ENCODE measurements at regions of chr6 and their contacts with region 1.

Region 1: DNA sequence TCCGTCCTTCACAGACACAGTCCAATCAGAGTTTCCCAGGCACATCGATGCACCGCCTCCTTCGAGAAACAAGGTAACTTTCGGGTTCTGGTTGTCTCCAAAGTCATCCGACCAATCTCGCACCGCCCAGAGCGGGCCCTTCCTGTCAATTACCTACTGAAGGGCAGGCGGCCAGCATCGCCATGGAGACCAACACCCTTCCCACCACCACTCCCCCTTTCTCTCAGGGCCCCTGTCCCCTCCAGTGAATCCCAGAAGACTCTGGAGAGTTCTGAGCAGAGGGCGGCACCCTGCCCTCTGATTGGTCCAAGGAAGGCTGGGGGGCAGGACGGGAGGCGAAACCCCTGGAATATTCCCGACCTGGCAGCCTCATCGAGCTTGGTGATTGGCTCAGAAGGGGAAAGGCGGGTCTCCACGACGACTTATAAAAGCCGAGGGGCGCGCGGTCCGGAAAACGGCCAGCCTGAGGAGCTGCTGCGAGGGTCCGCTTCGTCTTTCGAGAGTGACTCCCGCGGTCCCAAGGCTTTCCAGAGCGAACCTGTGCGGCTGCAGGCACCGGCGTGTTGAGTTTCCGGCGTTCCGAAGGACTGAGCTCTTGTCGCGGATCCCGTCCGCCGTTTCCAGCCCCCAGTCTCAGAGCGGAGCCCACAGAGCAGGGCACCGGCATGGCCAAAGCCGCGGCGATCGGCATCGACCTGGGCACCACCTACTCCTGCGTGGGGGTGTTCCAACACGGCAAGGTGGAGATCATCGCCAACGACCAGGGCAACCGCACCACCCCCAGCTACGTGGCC is at the start of gene HSPA1B:
- DNase-seq: peak; percentile 95
- H3K4me3 Mint-ChIP-seq: peak within 1 kb of the TSS; percentile 83
- H3K27ac Mint-ChIP-seq: peak within 1 kb of the TSS; percentile 93
- H3K4me1 Mint-ChIP-seq: peaks cover 41% of the 10 kb centered on the region
- H3K27me3 Mint-ChIP-seq: no peaks in the 10 kb centered on the region
- total RNA-seq, gene HSPA1B: 152 and 155 TPM in 2 replicates

Region 2: GRCh38 chr6:31680840-31681671 is 146.4 kb before region 1 on chr6 and contains the start of gene LY6G5C:
- intact Hi-C with region 1: loop called (anchors 1 kb)
- DNase-seq: peak; percentile 30
- H3K4me3 Mint-ChIP-seq: peak within 1 kb of the TSS; percentile 80
- H3K27ac Mint-ChIP-seq: peak within 1 kb of the TSS; percentile 73
- H3K4me1 Mint-ChIP-seq: peaks cover 24% of the 10 kb centered on the region
- H3K27me3 Mint-ChIP-seq: no peaks in the 10 kb centered on the region
- total RNA-seq, gene LY6G5C: 4.7 and 4.9 TPM in 2 replicates

Region 3: DNA sequence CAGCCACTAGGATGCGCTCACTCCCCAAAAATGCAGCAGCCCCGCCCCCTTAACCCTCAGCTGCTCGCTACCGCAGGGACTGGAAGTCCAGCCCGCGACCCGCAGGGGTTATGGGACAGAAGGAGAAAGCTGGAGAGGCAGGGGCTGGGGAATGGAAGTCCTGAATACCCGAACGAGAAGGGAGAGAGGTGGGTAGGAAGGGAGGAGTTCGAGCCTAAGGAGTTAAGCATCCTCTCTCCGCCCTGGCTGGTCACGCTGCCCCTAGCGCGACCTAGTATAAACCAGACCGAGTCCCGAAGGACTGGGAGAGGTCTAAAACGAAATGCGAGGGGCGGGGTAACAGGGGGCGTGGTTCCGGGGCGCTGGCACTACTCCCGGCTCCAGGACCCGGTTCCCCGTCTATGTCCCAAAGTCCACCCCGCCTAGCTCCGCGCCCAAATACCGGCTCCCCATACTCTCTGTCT is 97.9 kb before region 1 on chr6:
- intact Hi-C with region 1: loop called (anchors 1 kb)
- DNase-seq: peak; percentile 68
- H3K4me3 Mint-ChIP-seq: peak overlapping the region; percentile 95
- H3K27ac Mint-ChIP-seq: peak overlapping the region; percentile 74
- H3K4me1 Mint-ChIP-seq: peaks cover 54% of the 10 kb centered on the region
- H3K27me3 Mint-ChIP-seq: no peaks in the 10 kb centered on the region

Region 4: DNA sequence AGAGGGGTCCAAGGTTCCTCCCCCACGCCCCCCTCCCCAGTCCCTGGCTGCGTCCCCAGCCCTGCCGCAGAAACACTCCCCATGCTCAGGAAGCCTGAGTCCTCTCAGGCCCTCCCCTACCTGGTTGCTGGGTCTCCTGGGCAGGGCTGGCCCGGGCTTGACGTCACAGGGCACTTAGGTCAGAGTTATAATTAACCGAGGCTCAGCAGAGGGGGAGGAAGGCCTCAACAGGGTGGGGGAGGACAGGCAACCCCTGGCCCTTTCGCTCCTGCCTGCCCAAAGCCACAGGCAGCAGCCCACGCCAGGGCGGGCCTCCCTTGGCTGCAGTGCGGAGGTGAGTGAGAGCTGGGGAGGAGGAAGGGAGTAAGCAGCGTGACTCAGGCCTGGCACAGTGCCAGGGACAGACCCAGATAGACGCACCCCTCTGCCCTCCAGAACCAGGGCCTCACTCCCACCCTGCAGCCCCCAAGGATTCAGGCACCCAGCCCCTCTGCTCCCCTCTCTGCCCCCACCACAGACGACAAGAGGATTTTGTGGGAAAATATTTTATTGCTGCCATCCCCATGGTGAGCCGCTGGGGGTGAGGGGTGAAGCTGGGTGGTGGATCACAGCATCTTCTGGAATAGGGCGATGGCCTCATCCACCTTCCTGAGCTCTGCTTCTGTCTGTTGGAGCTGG is 50.4 kb before region 1 on chr6 and contains the start of gene VWA7:
- intact Hi-C with region 1: loop called (anchors 2 kb)
- DNase-seq: peak; percentile 68
- H3K4me3 Mint-ChIP-seq: no peak within 1 kb of the TSS
- H3K27ac Mint-ChIP-seq: peak within 1 kb of the TSS; percentile 87
- H3K4me1 Mint-ChIP-seq: peaks cover 25% of the 10 kb centered on the region
- H3K27me3 Mint-ChIP-seq: no peaks in the 10 kb centered on the region
- total RNA-seq, gene VWA7: 2.9 and 5.0 TPM in 2 replicates

Region 5: DNA sequence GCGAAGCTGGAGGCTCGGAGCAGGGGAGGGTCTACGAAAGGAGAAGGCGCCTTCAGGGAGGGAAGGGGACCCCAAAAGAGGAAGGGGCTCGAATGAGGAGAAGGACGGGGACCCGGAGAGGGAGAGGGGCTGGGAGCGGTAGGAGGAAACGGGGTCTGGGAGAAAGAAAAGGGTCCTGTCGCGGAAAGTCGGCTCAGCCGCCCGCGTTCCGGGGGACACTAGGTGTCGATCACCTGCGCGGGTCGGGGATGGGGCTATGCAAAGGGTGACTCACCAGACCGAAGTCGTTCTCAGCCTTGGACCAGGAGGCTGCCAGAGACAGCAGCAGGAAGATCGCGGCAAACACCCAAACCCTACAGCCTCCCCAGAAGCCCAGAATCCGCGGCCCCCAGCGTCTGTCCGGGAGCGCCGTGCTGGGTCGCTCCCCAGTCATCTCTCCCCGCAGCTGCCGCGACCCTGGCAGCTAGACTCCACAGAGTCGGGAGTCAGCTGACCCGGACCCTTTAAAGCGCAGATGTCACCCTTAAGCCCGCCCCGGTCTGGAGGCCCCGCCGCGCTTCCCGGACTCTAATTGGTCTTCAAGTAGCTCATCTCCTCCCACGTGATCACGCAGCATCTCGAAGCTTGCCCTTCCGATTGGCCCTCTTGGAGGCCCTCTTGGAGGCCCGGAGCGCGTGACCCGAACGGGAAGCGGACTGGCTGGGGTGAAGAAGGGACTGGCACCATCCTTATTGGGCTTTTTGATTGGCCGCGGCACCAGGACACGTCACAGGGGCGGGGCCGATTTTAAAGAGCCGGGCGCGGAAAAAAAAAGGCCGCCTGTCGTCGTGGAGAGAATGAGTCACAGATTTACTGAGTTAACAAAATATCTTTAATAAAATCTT is 35.1 kb after region 1 on chr6 and contains the start of gene NEU1:
- intact Hi-C with region 1: loop called (anchors 1 kb)
- DNase-seq: peak; percentile 99
- H3K4me3 Mint-ChIP-seq: peak within 1 kb of the TSS; percentile 97
- H3K27ac Mint-ChIP-seq: peak within 1 kb of the TSS; percentile 94
- H3K4me1 Mint-ChIP-seq: peaks cover 37% of the 10 kb centered on the region
- H3K27me3 Mint-ChIP-seq: peaks cover 3% of the 10 kb centered on the region
- total RNA-seq, gene NEU1: 22.1 and 24.3 TPM in 2 replicates